ENCODE measurements at regions of chr3 and their contacts with region 1.

Region 1: GRCh38 chr3:69161587-69162307 is 39.4 kb upstream of the LMOD3 start:
- DNase-seq: peak; percentile 62
- ATAC-seq: peak; percentile 60
- H3K4me3 Mint-ChIP-seq: no peak overlapping the region
- H3K27ac Mint-ChIP-seq: no peak overlapping the region
- H3K4me1 Mint-ChIP-seq: peaks cover 11% of the 10 kb centered on the region
- H3K27me3 Mint-ChIP-seq: peaks cover 7% of the 10 kb centered on the region

Region 2: GRCh38 chr3:69009559-69010410 is 152.0 kb before region 1 on chr3:
- CTCF ChIA-PET with region 1: no interaction called
- POLR2A ChIA-PET with region 1: no interaction called
- DNase-seq: no peak
- ATAC-seq: no peak
- H3K4me3 Mint-ChIP-seq: no peak overlapping the region
- H3K27ac Mint-ChIP-seq: no peak overlapping the region
- H3K4me1 Mint-ChIP-seq: peaks cover 17% of the 10 kb centered on the region
- H3K27me3 Mint-ChIP-seq: no peaks in the 10 kb centered on the region

Region 3: DNA sequence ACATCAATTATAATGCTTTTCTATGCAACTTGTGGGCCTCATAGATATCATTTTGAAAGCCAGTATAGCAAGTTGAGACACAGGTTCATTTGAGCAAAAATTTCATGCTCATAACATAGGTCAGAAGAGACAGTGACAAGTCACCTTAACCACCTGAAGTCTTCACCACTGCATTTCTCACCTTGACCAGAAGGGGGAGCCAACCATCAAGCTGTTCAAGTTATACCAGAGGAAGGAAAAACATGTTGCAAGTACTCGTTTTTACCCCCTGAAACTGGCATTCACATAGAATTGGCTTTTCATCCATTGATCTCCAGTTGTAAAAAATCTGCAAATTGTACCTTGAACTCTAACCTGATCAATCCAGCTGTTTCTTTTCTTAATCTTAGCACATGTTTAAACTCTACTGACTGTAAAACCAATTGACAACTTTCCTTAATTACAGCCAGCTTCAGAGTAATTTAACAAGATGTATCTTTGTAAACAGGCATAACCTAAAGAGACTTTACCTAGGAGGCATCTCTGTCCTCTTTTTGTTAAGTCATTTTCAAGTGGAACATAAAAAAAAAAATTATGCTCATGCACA is 40.8 kb before region 1 on chr3:
- CTCF ChIA-PET with region 1: interaction called, 33 read pairs
- POLR2A ChIA-PET with region 1: no interaction called
- DNase-seq: peak; percentile 90
- ATAC-seq: peak; percentile 72
- H3K4me3 Mint-ChIP-seq: no peak overlapping the region
- H3K27ac Mint-ChIP-seq: no peak overlapping the region
- H3K4me1 Mint-ChIP-seq: peaks cover 5% of the 10 kb centered on the region
- H3K27me3 Mint-ChIP-seq: peaks cover 2% of the 10 kb centered on the region

Region 4: GRCh38 chr3:69181592-69182211 is 20.0 kb after region 1 on chr3:
- CTCF ChIA-PET with region 1: interaction called, 13 read pairs
- POLR2A ChIA-PET with region 1: no interaction called
- DNase-seq: no peak
- ATAC-seq: no peak
- H3K4me3 Mint-ChIP-seq: no peak overlapping the region
- H3K27ac Mint-ChIP-seq: no peak overlapping the region
- H3K4me1 Mint-ChIP-seq: peaks cover 13% of the 10 kb centered on the region
- H3K27me3 Mint-ChIP-seq: no peaks in the 10 kb centered on the region

Region 5: DNA sequence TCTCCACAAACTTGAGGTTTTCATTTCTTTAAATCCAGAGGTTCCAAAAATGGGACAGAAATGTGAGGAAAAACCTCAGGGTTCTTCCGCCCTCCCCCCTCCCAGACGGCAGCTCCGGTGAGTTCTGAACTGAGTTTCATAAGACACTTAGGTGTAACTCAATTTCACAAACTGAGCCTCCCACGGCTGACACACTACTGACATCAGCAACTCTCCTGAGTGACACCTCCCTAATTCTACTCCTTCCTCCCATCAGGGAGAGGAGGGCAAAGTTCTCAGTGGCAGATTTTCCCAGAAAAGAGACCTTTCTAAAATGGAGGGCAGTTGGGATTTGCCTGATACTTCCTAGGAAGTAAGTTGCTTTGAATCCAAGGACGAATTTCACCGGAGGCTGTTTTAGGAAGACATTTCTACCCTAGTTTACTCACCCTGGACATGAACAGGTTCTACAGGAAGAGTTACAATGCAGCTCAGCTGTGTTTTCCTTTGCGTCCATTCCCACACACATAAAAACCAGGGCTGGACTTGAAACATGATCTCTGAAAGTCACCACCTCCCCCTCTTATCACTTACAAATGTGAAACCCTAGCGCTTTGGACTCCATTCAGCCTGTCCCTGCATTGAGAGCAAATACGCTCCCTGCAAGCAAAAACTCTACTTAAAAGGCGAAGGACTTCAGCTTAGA is 38.8 kb after region 1 on chr3:
- CTCF ChIA-PET with region 1: interaction called, 12 read pairs
- POLR2A ChIA-PET with region 1: no interaction called
- DNase-seq: peak; percentile 59
- ATAC-seq: peak; percentile 31
- H3K4me3 Mint-ChIP-seq: peak overlapping the region; percentile 77
- H3K27ac Mint-ChIP-seq: peak overlapping the region; percentile 82
- H3K4me1 Mint-ChIP-seq: peaks cover 80% of the 10 kb centered on the region
- H3K27me3 Mint-ChIP-seq: no peaks in the 10 kb centered on the region

Region 6: DNA sequence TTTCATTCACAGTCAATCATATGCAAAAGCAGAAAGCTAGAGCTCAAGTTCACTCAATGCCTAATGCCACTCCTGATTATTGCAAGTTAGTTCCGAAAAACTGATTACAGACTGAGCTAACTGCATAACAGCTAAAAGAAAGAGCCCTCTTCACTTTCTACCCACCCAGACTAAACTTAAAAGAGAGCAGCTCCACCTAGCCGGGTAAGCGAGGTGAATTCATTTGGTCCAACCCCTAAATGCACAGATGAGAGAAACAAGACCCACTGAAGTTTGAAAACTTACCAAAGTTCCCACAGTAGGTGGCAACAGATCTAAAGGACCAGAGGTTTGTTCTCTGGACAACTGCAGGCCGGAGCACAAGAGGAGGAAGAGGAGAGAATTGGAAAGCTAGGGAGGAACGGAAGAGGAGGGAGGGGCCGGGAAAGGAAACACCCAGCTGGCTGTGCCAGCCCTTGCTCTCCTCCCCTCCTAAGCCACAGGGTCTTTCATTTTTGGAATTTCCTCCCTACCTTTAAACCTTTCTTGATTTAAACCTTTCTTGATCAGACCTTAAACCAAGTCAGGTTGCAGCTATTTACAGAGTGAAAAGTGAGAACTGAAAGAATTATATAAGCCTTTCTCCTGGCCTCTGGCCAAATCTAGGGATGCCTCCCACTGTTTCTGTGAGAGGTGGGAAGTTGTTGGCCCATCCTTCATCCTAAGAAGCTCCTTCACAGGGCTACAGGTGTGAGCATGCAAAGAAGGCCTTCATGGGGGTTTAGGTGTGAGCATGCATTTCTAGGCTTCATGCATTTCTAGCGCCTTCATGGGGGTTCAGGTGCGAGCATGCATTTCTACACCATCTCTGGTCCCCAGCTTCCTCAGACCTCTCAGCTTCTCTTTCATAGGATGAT is 75.3 kb after region 1 on chr3:
- CTCF ChIA-PET with region 1: interaction called, 29 read pairs
- POLR2A ChIA-PET with region 1: no interaction called
- DNase-seq: peak; percentile 32
- ATAC-seq: peak; percentile 45
- H3K4me3 Mint-ChIP-seq: peak overlapping the region; percentile 71
- H3K27ac Mint-ChIP-seq: peak overlapping the region; percentile 82
- H3K4me1 Mint-ChIP-seq: peaks cover 19% of the 10 kb centered on the region
- H3K27me3 Mint-ChIP-seq: no peaks in the 10 kb centered on the region

Region 7: DNA sequence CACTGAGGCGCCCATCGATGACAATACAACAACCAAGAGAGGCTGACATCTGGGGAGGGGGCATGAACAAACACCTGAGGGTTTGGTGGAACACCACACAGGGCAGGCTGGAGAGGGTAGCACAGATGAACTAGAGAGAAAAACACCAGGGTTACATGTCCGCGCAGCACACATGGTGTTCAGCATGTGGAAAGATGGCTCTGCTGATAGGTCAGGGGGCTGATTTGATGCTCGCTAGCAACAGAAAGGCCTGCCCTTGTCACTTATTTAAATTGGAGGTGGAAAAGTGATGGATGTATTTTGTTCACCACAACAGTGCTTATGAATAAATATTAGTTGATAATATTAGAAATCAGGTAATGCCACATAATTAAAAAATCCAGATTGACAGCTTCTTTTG is 156.7 kb after region 1 on chr3:
- CTCF ChIA-PET with region 1: interaction called, 315 read pairs
- POLR2A ChIA-PET with region 1: no interaction called
- DNase-seq: no peak
- ATAC-seq: no peak
- H3K4me3 Mint-ChIP-seq: no peak overlapping the region
- H3K27ac Mint-ChIP-seq: no peak overlapping the region
- H3K4me1 Mint-ChIP-seq: no peaks in the 10 kb centered on the region
- H3K27me3 Mint-ChIP-seq: no peaks in the 10 kb centered on the region

Region 8: DNA sequence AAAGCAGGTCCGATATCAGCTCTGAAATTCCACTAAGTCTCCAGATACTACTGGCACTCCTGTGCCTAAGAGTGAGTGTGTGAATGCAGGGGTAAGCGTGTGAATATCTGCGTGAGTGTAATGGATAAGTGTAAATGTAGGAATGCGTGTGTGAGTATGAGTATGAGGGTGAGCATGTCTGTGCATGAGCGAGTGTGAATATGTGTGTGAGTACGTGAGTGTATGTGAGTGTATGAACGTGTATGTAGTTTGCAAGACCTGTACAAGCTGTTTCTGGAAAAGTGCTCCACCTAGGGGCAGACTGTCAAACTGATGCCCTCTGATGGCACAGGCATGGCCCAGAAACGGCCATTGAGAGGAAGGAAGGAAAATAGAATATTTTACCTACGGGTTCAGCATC is 248.5 kb after region 1 on chr3:
- CTCF ChIA-PET with region 1: interaction called, 36 read pairs
- POLR2A ChIA-PET with region 1: no interaction called
- DNase-seq: peak; percentile 81
- ATAC-seq: peak; percentile 94
- H3K4me3 Mint-ChIP-seq: no peak overlapping the region
- H3K27ac Mint-ChIP-seq: no peak overlapping the region
- H3K4me1 Mint-ChIP-seq: peaks cover 3% of the 10 kb centered on the region
- H3K27me3 Mint-ChIP-seq: peaks cover 12% of the 10 kb centered on the region

Measured in activated CD8-positive, alpha-beta T cell treated with anti-CD3 and anti-CD28 coated beads, Interleukin-2, amount 10 ng/mL, durations not matched to agents 7 days and 5 days (primary cell).